AG04450 (cell line): ENCODE measurements at regions of chr2 and their contacts with region 1.

Region 1: GRCh38 chr2:101883863-101884262 is 107.9 kb upstream of the IL1R2 start:
- DNase-seq: peak; percentile 10
- H3K4me3 ChIP-seq: no peak overlapping the region
- H3K27ac ChIP-seq: no peak overlapping the region
- H3K27me3 ChIP-seq: no peaks in the 10 kb centered on the region
- CTCF ChIP-seq: peak; percentile 70

Region 2: GRCh38 chr2:101860157-101860556 is 23.7 kb before region 1 on chr2:
- CTCF ChIA-PET with region 1: interaction called, 10 read pairs
- POLR2A ChIA-PET with region 1: no interaction called
- DNase-seq: no peak
- H3K4me3 ChIP-seq: no peak overlapping the region
- H3K27ac ChIP-seq: no peak overlapping the region
- H3K27me3 ChIP-seq: no peaks in the 10 kb centered on the region
- CTCF ChIP-seq: no peak

Region 3: DNA sequence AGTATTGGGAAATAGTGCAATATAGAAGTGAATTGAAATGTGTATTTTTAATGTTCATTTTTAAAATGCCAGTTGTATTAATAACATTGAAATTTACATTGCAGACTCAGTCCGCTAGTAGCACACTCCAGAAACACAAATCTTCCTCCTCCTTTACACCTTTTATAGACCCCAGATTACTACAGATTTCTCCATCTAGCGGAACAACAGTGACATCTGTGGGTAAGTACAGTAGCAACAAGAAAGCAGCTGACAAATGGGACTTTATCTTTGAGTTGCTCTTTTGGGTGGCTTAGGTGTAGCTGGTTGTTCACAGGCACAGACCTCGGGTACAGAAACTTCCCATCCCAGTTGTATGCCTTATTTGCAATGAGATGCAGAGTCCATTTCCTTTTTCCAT is 10.3 kb before region 1 on chr2:
- CTCF ChIA-PET with region 1: interaction called, 23 read pairs
- POLR2A ChIA-PET with region 1: interaction called, 3 read pairs
- DNase-seq: no peak
- H3K4me3 ChIP-seq: no peak overlapping the region
- H3K27ac ChIP-seq: no peak overlapping the region
- H3K27me3 ChIP-seq: no peaks in the 10 kb centered on the region
- CTCF ChIP-seq: peak; percentile 27; the same call in 1 of the 2 replicates

Region 4: GRCh38 chr2:101931404-101931803 is 47.5 kb after region 1 on chr2:
- CTCF ChIA-PET with region 1: interaction called, 12 read pairs
- POLR2A ChIA-PET with region 1: no interaction called
- DNase-seq: no peak
- H3K4me3 ChIP-seq: no peak overlapping the region
- H3K27ac ChIP-seq: no peak overlapping the region
- H3K27me3 ChIP-seq: peaks cover 11% of the 10 kb centered on the region
- CTCF ChIP-seq: no peak

Region 5: DNA sequence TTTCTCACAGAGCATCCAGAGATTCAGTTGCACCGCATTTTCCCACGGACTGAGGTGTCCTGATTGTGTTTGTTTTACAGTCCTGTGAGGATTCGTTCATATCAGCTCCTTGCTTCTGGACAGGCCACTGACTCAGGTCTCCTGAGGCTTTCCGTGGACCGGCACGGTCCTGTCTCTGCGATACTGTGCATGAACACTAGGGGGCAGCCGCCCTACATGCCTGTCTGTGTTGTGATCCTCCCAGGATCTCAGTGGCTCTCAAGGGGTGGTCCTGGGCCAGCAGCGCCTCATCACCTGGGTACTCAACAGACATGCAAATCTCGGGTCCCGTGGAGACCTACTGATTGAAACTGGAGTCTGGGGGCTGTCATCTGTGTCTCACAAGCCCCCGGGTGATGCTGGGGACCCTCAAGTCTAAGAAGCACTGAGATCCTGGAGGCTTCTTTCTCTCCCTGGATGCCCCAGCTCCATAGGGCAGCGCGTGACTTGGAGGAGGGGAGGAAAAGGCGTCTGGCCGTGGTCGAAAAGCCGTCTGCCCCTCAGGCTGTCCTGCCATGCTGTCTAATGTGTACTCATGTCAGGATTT is 136.8 kb after region 1 on chr2:
- CTCF ChIA-PET with region 1: interaction called, 22 read pairs
- POLR2A ChIA-PET with region 1: no interaction called
- DNase-seq: peak; percentile 69
- H3K4me3 ChIP-seq: no peak overlapping the region
- H3K27ac ChIP-seq: no peak overlapping the region
- H3K27me3 ChIP-seq: no peaks in the 10 kb centered on the region
- CTCF ChIP-seq: peak; percentile 99

Region 6: DNA sequence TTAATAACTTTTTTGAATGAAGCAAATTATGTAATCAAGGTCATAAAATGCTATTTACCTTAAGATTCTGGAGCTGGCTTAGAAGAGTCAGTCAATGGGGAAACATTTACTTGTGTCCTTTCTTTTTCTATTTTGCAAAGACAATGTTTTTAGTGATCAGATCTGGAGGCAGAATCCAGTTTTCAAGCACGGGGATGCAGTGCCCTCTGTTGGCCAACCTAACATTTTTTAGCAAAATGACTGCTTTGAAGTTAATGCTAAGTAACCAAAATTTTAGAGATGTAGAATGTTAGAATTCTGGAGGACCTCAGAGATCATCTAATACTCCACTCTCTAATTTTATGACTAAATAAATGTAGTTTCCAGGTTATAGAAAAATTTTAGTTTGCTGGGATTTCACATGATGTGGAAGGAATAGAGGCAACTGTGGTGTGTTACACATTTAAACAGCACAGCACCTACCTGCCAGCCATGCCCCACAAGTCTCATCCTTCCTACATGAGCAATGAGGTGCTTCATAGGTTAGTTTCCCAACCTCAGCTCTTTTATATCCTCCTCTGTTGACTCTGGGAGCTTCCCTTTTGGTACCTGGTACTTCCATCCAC is 565.6 kb after region 1 on chr2:
- CTCF ChIA-PET with region 1: interaction called, 33 read pairs
- POLR2A ChIA-PET with region 1: no interaction called
- DNase-seq: no peak
- H3K4me3 ChIP-seq: no peak overlapping the region
- H3K27ac ChIP-seq: no peak overlapping the region
- H3K27me3 ChIP-seq: peaks cover 10% of the 10 kb centered on the region
- CTCF ChIP-seq: peak; percentile 80